ENCODE measurements at regions of chr5 and their contacts with region 1.

Region 1: DNA sequence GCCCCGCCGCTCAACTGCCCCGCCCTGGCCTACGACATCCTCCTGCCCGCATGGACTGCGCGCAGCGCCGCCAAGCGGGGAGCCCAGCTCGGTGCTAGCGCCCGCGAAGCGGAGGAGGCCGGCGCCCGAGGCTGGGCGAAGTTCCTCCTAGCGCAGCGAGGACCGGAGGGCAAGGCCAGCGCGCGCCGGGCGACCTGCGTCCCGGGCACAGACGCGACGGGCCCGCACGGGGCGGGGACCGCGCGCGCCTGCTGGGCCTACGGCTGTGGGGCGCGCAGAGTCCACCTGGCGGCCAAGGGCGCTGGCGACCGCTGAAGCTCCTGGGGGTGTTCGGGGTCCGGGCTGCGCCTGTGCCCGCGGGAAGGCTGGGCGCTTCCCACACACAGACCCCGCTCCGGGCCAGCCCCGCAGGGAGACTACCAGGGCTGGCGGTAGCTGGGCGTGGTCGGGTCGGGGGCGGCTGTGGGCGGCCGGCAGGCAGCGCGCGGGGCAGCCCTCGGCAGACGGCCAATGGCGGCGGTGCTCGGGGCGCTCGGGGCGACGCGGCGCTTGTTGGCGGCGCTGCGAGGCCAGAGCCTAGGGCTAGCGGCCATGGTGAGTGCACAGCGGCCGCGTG is at the start of gene PCBD2:
- DNase-seq: peak; percentile 62 to 94
- H3K4me3 ChIP-seq: peak within 1 kb of the TSS; percentile 85 to 97
- H3K27ac ChIP-seq: peak within 1 kb of the TSS; percentile 96
- H3K4me1 ChIP-seq: no peaks in the 10 kb centered on the region
- H3K27me3 ChIP-seq: no peaks in the 10 kb centered on the region
- CTCF ChIP-seq: peak; percentile 84 to 97 (median 89)
- total RNA-seq, gene PCBD2: 7.6 TPM

Region 2: DNA sequence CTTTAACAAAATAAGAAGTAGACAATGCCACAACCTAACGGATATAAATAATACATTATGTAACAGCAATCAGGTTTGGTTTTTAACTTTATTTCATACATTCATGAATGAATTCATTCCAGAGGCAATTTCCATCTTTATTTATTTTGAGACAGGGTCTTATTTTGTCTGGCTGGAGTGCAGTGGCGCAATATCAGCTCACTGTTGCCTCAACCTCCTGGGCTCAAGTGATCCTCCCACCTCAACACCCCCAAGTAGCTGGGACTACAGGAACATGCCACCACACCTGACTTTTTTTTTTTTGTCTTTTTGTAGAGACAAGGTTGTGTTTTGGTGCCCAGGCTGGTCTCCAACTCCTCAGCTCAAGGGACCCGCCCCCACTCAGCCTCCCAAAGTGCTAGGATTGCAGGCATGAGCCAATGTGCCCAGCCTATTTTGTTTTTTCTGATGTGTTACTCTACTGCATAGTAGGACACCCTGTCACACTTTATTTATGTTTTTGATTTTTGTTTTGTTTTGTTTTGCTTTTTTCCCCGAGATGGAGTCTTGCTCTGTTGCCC is 85.3 kb before region 1 on chr5:
- intact Hi-C with region 1: no loop called
- DNase-seq: no peak
- H3K4me3 ChIP-seq: no peak overlapping the region
- H3K27ac ChIP-seq: no peak overlapping the region
- H3K4me1 ChIP-seq: no peaks in the 10 kb centered on the region
- H3K27me3 ChIP-seq: no peaks in the 10 kb centered on the region
- CTCF ChIP-seq: no peak

Region 3: DNA sequence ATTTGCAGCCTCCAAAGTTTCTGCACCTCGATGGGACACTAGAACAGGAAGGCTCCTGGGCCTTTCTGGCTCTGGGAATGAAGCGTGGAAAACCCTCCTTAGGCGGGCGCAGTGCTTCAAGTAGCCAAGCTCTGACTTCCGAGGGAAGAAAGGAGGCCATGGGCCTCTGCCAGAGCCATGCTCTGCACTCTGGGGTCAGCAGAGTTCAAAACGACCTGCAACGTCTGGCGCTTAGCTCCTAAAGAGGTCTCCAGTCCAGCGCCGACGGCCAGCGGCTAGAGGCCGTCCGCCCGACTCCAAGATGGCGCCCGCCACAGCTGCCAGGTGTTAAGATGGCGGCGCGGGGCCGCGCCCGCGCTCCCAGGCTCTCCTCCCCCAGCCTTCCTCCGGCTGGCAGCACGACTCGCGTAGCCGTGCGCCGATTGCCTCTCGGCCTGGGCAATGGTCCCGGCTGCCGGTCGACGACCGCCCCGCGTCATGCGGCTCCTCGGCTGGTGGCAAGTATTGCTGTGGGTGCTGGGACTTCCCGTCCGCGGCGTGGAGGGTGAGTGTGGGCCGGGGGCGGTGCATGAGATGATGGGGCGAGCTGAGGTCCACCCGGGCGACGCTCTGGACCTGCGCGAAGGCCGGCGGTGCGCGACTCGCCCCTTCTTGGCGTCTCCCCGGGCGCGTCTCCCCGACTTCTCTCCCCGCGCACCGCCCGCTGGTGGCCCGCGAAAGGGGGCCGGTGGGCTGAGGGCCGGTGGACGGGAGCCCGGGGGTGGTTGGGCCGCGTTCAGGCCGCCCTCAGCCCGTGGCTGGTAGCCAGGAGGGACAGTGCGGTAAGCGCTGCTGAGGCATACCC is 30.5 kb before region 1 on chr5 and contains the start of gene TXNDC15:
- intact Hi-C with region 1: loop called (anchors 1 kb)
- DNase-seq: peak; percentile 47 to 93
- H3K4me3 ChIP-seq: peak within 1 kb of the TSS; percentile 94 to 96
- H3K27ac ChIP-seq: peak within 1 kb of the TSS; percentile 96 to 97
- H3K4me1 ChIP-seq: peaks cover 0 to 9% of the 10 kb centered on the region in 2 donors
- H3K27me3 ChIP-seq: no peaks in the 10 kb centered on the region
- CTCF ChIP-seq: no peak
- total RNA-seq, gene TXNDC15: 211 TPM